ENCODE measurements at regions of chr9 and their contacts with region 1.

Region 1: GRCh38 chr9:97982683-97983588 is at the start of gene ANP32B:
- DNase-seq: peak; percentile 94
- CTCF ChIP-seq: peak; percentile 92

Region 2: GRCh38 chr9:97954550-97954989 is 28.4 kb before region 1 on chr9:
- CTCF ChIA-PET with region 1: interaction called, 10 read pairs
- POLR2A ChIA-PET with region 1: no interaction called
- DNase-seq: peak; percentile 70
- CTCF ChIP-seq: peak; percentile 66

Region 3: DNA sequence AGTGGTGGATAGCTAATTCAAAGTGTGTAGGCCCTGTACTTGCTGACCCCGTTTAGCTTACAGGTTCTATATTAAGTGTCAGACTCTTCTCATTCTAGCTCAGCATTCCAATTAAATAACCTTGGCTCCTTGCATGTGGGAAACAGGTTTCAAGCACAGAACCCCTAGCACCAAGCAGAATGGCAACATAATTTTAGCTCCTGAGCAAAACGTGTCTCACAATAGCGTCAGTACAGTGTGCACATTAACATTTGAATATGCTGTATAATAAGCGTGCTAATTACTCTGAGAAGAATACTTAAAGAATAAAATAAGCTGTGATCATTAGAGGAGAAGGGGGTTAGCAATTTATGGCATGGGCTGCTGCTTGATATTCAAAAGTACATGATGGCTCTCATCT is 20.8 kb before region 1 on chr9:
- CTCF ChIA-PET with region 1: interaction called, 11 read pairs
- POLR2A ChIA-PET with region 1: no interaction called
- DNase-seq: no peak
- CTCF ChIP-seq: no peak

Region 4: DNA sequence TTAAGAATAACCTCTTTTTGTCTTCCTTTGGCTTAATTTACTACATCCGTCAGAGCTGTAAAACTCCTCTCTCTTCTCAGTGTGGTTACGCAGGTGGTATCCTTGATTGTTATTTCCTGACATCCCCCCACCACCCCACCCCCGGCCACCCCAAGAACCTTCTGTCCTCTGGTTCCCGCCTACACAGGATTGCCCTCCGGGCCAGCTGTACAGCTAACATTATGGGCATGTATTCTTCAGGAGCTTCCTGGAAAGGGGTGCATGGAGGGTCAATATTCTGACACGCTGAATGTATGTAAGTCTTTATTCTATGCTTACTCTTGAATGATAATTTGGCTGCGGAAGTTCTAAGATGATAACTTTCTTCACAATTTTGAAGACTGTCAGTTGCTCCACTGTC is 12.8 kb before region 1 on chr9:
- CTCF ChIA-PET with region 1: interaction called, 17 read pairs
- POLR2A ChIA-PET with region 1: no interaction called
- DNase-seq: no peak
- CTCF ChIP-seq: no peak

Measured in GM10248 (cell line).